B cell (primary cell): ENCODE measurements at regions of chr17 and their contacts with region 1.

Region 1: GRCh38 chr17:75940724-75941441 is at the start of gene FBF1:
- DNase-seq: peak; percentile 89
- ATAC-seq: peak; percentile 99
- H3K4me3 ChIP-seq: peak within 1 kb of the TSS; percentile 6 to 97 (median 81)
- H3K4me3 Mint-ChIP-seq: peak within 1 kb of the TSS; percentile 92
- H3K27ac ChIP-seq: peak within 1 kb of the TSS; percentile 47 to 82
- H3K27ac Mint-ChIP-seq: peak within 1 kb of the TSS; percentile 89
- H3K4me1 ChIP-seq: peaks cover 0 to 14% of the 10 kb centered on the region in 2 donors
- H3K4me1 Mint-ChIP-seq: peaks cover 12% of the 10 kb centered on the region
- H3K27me3 ChIP-seq: no peaks in the 10 kb centered on the region
- H3K27me3 Mint-ChIP-seq: no peaks in the 10 kb centered on the region
- CTCF ChIP-seq: no peak
- total RNA-seq, gene FBF1: 27.0 and 31.5 TPM in 2 replicates

Region 2: GRCh38 chr17:75784473-75785015 is 156.3 kb before region 1 on chr17 and contains the start of gene UNK:
- CTCF ChIA-PET with region 1: no interaction called
- POLR2A ChIA-PET with region 1: no interaction called
- intact Hi-C with region 1: loop called (anchors 1 kb)
- DNase-seq: peak; percentile 99
- ATAC-seq: peak; percentile 75
- H3K4me3 ChIP-seq: peak within 1 kb of the TSS; percentile 75 to 83 (median 81)
- H3K4me3 Mint-ChIP-seq: peak within 1 kb of the TSS; percentile 96
- H3K27ac ChIP-seq: peak within 1 kb of the TSS; percentile 100
- H3K27ac Mint-ChIP-seq: peak within 1 kb of the TSS; percentile 100
- H3K4me1 ChIP-seq: peaks cover 42 to 49% of the 10 kb centered on the region in 2 donors
- H3K4me1 Mint-ChIP-seq: peaks cover 53% of the 10 kb centered on the region
- H3K27me3 ChIP-seq: no peaks in the 10 kb centered on the region
- H3K27me3 Mint-ChIP-seq: no peaks in the 10 kb centered on the region
- CTCF ChIP-seq: no peak
- total RNA-seq, gene UNK: 70.3 and 82.3 TPM in 2 replicates

Region 3: GRCh38 chr17:75978938-75979704 is 38.2 kb after region 1 on chr17 and contains the starts of genes ACOX1 and TEN1:
- CTCF ChIA-PET with region 1: interaction called, 6 read pairs
- POLR2A ChIA-PET with region 1: interaction called, 4 read pairs
- intact Hi-C with region 1: loop called (anchors 1 kb)
- DNase-seq: peak; percentile 98
- ATAC-seq: peak; percentile 93
- H3K4me3 ChIP-seq: peak within 1 kb of the TSS; percentile 73 to 100 (median 87)
- H3K4me3 Mint-ChIP-seq: peak within 1 kb of the TSS; percentile 94
- H3K27ac ChIP-seq: peak within 1 kb of the TSS; percentile 92 to 97
- H3K27ac Mint-ChIP-seq: peak within 1 kb of the TSS; percentile 98
- H3K4me1 ChIP-seq: peaks cover 9 to 19% of the 10 kb centered on the region in 2 donors
- H3K4me1 Mint-ChIP-seq: peaks cover 44% of the 10 kb centered on the region
- H3K27me3 ChIP-seq: no peaks in the 10 kb centered on the region
- H3K27me3 Mint-ChIP-seq: no peaks in the 10 kb centered on the region
- CTCF ChIP-seq: peak; percentile 35
- total RNA-seq, gene ACOX1: 31.2 and 38.8 TPM in 2 replicates
- total RNA-seq, gene TEN1: 19.8 and 25.5 TPM in 2 replicates

Region 4: GRCh38 chr17:76005263-76006149 is 64.6 kb after region 1 on chr17:
- CTCF ChIA-PET with region 1: interaction called, 5 read pairs
- POLR2A ChIA-PET with region 1: no interaction called
- intact Hi-C with region 1: loop called (anchors 2 kb)
- DNase-seq: peak; percentile 85
- ATAC-seq: peak; percentile 80
- H3K4me3 ChIP-seq: no peak overlapping the region
- H3K4me3 Mint-ChIP-seq: no peak overlapping the region
- H3K27ac ChIP-seq: no peak overlapping the region
- H3K27ac Mint-ChIP-seq: peak overlapping the region; percentile 56
- H3K4me1 ChIP-seq: peaks cover 0 to 3% of the 10 kb centered on the region in 2 donors
- H3K4me1 Mint-ChIP-seq: no peaks in the 10 kb centered on the region
- H3K27me3 ChIP-seq: no peaks in the 10 kb centered on the region
- H3K27me3 Mint-ChIP-seq: no peaks in the 10 kb centered on the region
- CTCF ChIP-seq: peak; percentile 85

Region 5: GRCh38 chr17:76547184-76547641 is 606.3 kb after region 1 on chr17:
- CTCF ChIA-PET with region 1: no interaction called
- POLR2A ChIA-PET with region 1: no interaction called
- intact Hi-C with region 1: no loop called
- DNase-seq: peak; percentile 78
- ATAC-seq: peak; percentile 90
- H3K4me3 ChIP-seq: no peak overlapping the region
- H3K4me3 Mint-ChIP-seq: no peak overlapping the region
- H3K27ac ChIP-seq: no peak overlapping the region
- H3K27ac Mint-ChIP-seq: no peak overlapping the region
- H3K4me1 ChIP-seq: peaks cover 4 to 8% of the 10 kb centered on the region in 2 donors
- H3K4me1 Mint-ChIP-seq: peaks cover 7% of the 10 kb centered on the region
- H3K27me3 ChIP-seq: peaks cover 0 to 7% (median 3%) of the 10 kb centered on the region in 4 experiments
- H3K27me3 Mint-ChIP-seq: peaks cover 17% of the 10 kb centered on the region
- CTCF ChIP-seq: peak; percentile 66